Motor neuron (in vitro differentiated cells): ENCODE measurements at regions of chr15 and their contacts with region 1.

Region 1: GRCh38 chr15:69475769-69476358 is 23.2 kb downstream of the RPLP1 start:
- ATAC-seq: peak; percentile 63 to 87 (median 70)
- H3K4me3 ChIP-seq: no peak overlapping the region
- H3K27ac ChIP-seq: no peak overlapping the region
- H3K4me1 ChIP-seq: peaks cover 0 to 4% of the 10 kb centered on the region in 2 donors

Region 2: DNA sequence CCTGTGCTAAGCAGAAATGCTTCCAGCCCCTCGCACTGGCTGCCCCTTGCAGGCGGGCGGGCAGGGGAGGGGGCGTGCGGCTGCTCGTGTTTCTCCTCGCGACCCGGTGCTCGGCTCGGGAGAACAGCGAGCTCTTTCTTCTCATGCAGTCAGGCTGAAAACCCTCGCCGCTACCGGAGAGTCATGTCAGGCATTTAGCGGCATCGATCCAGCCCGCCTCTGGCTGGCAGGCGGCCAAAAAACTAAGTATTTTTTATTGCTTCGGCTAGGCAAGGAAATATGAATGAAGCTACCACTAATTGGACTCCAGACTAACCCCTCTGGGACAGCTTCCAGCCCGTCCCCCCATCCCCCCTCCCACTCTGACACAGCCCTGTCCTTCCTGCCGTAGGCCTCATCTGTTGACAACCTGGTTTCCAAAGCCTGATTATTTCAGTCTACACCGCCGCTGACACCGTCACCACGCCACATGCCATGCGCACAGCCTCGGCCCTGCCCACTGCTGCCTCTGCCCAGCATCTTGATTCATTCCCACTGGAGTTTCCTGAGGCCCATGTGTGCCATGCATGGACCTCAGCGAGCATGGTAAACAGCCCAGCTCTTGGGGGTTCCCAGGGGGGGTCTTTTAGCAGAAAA is 586.6 kb after region 1 on chr15:
- in situ Hi-C with region 1: loop called in 1 of 9 experiments (anchors 25 kb)
- ATAC-seq: peak in 7 of 8 experiments; percentile 3 to 85 (median 80)
- H3K4me3 ChIP-seq: peak overlapping the region in 1 of 5 donors; percentile 1
- H3K27ac ChIP-seq: peak overlapping the region; percentile 67
- H3K4me1 ChIP-seq: peaks cover 48 to 49% of the 10 kb centered on the region in 2 donors

Region 3: GRCh38 chr15:70097337-70098169 is 621.7 kb after region 1 on chr15 and contains the start of gene TLE3:
- in situ Hi-C with region 1: loop called in 1 of 9 experiments (anchors 25 kb)
- ATAC-seq: peak; percentile 46 to 67 (median 54)
- H3K4me3 ChIP-seq: peak within 1 kb of the TSS; percentile 59 to 97 (median 83)
- H3K27ac ChIP-seq: peak within 1 kb of the TSS; percentile 87 to 88
- H3K4me1 ChIP-seq: peaks cover 32 to 51% of the 10 kb centered on the region in 2 donors
- total RNA-seq, gene TLE3: 28.2 to 103 (median 52.5) TPM

Region 4: DNA sequence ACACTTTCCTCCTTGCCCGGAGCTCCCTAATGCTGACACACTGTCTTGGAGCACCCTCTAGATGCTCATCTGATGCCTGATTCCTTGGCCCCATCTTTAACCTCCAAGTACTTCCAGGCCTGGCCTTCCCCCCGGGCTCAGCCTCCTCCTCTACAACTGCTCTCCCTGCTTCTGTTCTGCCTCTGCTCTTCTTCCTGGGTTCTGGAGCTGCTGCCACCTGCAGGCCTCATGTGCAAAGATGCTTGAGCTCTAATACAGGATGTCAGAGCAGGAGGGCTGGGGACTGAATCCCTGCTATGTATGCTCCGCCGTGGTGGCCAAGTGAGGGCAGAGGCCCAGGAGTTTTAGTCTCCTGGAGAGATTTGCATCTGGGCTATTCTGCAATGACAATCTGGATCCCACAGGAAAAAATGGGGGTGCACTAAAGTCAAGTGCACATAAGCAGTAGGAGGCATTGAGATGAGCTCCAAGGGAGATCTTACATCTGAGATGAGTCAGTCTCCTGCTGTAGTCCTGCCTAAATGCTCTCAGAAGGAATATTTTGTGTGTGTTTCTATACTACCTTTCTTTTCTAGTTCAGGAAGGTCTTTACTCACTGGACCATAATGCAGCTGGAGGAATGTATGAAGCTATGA is 991.1 kb after region 1 on chr15:
- in situ Hi-C with region 1: loop called in 2 of 9 experiments (anchors 25 kb)
- ATAC-seq: peak; percentile 79 to 93 (median 90)
- H3K4me3 ChIP-seq: no peak overlapping the region
- H3K27ac ChIP-seq: no peak overlapping the region
- H3K4me1 ChIP-seq: peaks cover 7 to 18% of the 10 kb centered on the region in 2 donors

Region 5: GRCh38 chr15:70488002-70488605 is 1012.2 kb after region 1 on chr15:
- in situ Hi-C with region 1: loop called in 6 of 9 experiments (anchors 25 kb)
- ATAC-seq: peak; percentile 31 to 78 (median 72)
- H3K4me3 ChIP-seq: no peak overlapping the region
- H3K27ac ChIP-seq: no peak overlapping the region
- H3K4me1 ChIP-seq: peaks cover 8 to 12% of the 10 kb centered on the region in 2 donors